ENCODE measurements at regions of chr20 and their contacts with region 1.

Region 1: DNA sequence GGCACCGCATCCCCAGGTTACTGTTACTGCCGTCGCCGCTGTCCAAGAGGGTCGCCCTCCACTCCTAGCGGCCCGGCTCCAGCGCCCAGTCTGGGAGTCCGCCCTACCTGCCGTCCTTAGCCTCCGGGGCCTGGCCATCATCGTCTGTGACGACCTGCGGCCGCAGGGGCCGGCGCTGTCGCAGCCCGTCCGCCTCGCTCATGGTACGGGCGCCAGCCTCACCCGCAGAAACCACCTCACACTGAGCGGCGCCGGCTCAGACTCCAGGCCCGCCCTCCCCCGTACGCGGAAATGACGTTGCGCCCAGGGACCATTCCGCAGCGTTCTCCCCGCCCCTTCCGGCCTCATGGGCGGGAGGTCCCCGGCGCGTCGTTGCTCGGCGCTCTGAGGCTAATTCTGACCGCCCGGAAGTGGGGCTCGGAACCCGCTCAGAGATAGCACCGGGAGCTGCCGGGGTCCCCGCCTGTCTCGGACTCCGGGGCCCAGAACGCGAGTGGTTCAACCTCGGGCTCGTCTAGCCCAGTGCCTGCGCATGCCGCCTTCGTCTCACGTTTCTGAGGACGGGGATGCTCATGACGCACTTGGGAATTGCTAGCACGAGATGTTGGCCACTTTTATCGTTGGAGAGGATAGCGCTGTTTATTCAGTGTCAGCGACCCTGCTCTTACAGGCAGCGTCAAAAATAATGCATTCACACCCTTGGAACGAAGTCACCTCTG is at the start of gene APMAP:
- DNase-seq: peak; percentile 98
- H3K4me3 ChIP-seq: peak within 1 kb of the TSS; percentile 91 to 95
- H3K27ac ChIP-seq: peak within 1 kb of the TSS; percentile 76 to 89
- H3K4me1 ChIP-seq: peaks cover 17 to 20% of the 10 kb centered on the region in 2 experiments; a peak in 3 of 4 replicates
- H3K27me3 ChIP-seq: no peaks in the 10 kb centered on the region
- CTCF ChIP-seq: no peak
- EP300 ChIP-seq: no peak
- RAD21 ChIP-seq: no peak
- polyA plus RNA-seq, gene APMAP: 107 and 115 TPM in 2 replicates

Region 2: DNA sequence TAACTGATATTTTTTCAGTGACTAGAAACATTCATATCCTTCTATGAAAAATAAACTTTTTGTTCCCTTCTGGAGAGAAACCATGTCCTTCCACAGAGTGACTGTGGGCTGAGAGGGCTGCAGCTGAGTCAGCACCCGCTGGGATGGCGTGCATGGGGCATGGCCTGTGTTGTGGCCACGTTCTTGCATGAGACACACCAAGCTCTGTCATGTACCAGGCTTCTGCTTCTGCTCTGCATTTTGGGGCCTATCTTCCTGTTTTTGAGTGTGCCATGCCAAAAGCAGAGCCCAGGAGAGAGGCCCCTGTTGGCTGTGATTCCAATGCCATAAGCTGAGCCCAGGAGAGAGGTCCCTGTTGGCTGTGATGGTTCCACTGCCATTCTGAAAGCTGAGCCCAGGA is 10.9 kb before region 1 on chr20:
- CTCF ChIA-PET with region 1: interaction called, 10 read pairs
- POLR2A ChIA-PET with region 1: no interaction called
- DNase-seq: no peak
- H3K4me3 ChIP-seq: no peak overlapping the region
- H3K27ac ChIP-seq: no peak overlapping the region
- H3K4me1 ChIP-seq: no peaks in the 10 kb centered on the region; a peak in 1 of 4 replicates
- H3K27me3 ChIP-seq: no peaks in the 10 kb centered on the region
- CTCF ChIP-seq: no peak
- EP300 ChIP-seq: no peak
- RAD21 ChIP-seq: no peak

Region 3: GRCh38 chr20:25009156-25010145 is 16.8 kb after region 1 on chr20:
- CTCF ChIA-PET with region 1: interaction called, 10 read pairs
- POLR2A ChIA-PET with region 1: no interaction called
- DNase-seq: no peak
- H3K4me3 ChIP-seq: no peak overlapping the region
- H3K27ac ChIP-seq: no peak overlapping the region
- H3K4me1 ChIP-seq: no peaks in the 10 kb centered on the region; a peak in 1 of 4 replicates
- H3K27me3 ChIP-seq: no peaks in the 10 kb centered on the region
- CTCF ChIP-seq: no peak
- EP300 ChIP-seq: no peak
- RAD21 ChIP-seq: no peak

Region 4: DNA sequence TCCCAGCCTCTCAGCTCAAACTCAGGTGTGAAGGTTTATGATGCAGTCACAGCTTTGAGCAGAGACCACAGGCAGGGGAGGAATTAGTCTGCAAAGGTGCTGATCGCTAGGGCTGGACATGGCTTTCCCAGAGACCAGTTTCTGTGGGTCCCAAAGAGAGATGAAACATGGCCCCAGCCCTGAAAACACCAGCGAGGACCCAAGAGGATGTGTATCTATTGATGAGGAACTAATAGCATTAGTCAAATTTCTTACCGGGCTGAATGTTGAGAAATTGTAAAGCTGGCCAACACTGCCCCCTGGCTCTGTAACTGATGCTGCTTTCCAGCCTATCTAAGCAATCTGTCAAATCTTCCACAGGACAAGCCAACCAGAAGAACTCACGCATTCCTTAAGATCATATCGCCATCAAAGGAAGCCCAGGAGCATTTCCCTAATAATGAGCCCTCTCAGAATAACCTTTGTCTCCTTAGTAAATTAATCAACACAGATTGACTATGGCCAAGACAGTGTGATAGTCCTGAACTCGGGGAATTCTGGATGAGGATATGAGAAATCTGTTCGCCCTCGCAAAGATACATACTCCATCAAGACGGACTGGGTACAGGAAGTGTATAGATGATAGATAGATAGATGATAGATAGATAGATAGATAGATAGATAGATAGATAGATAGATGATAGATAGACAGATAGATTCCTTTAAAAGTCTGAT is 73.1 kb after region 1 on chr20:
- CTCF ChIA-PET with region 1: interaction called, 48 read pairs
- POLR2A ChIA-PET with region 1: no interaction called
- DNase-seq: peak; percentile 63
- H3K4me3 ChIP-seq: peak overlapping the region in 1 of 2 experiments; percentile 11; a peak in 1 of 4 replicates
- H3K27ac ChIP-seq: no peak overlapping the region
- H3K4me1 ChIP-seq: no peaks in the 10 kb centered on the region
- H3K27me3 ChIP-seq: peaks cover 71% of the 10 kb centered on the region
- CTCF ChIP-seq: peak; percentile 73
- EP300 ChIP-seq: no peak
- RAD21 ChIP-seq: peak; percentile 75

Region 5: DNA sequence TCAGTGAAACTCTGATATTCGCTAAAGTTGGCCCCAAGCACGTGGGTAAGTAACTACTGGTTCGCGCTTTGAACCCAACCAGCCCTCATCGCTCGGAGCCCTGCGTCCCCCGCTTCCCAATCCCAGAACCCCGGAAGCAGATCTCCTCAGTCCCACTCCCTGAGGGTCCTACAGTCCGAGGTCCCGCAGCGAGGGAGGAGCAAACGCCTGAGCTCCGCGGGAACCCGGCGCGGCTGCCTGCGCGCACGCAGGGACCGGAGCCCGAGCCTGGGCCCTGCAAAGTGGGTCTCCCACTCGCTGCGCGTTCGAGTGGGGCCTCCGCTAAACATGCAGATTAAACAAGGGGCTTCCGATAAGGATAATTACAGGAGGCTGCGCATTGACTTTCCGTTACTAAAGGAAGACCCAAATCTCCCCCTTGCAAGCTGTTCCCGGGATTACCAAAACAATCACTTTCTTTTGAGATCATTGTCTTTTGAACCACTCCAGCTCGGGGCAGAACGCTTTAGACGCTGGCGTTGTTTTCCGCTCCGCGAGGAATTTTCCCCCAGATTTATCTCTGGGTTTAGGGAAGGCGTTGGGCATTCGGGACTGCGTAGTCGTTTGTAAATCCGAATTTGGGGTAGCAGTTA is 90.6 kb after region 1 on chr20:
- CTCF ChIA-PET with region 1: no interaction called
- POLR2A ChIA-PET with region 1: no interaction called
- DNase-seq: peak; percentile 45
- H3K4me3 ChIP-seq: peak overlapping the region in 1 of 2 experiments; percentile 1; a peak in 1 of 4 replicates
- H3K27ac ChIP-seq: no peak overlapping the region
- H3K4me1 ChIP-seq: peaks cover 0 to 5% of the 10 kb centered on the region in 2 experiments; a peak in 1 of 4 replicates
- H3K27me3 ChIP-seq: peaks cover 74% of the 10 kb centered on the region
- CTCF ChIP-seq: no peak
- EP300 ChIP-seq: no peak
- RAD21 ChIP-seq: no peak

Region 6: GRCh38 chr20:25178563-25179438 is 186.2 kb after region 1 on chr20:
- CTCF ChIA-PET with region 1: interaction called, 23 read pairs
- POLR2A ChIA-PET with region 1: no interaction called
- DNase-seq: peak; percentile 65
- H3K4me3 ChIP-seq: peak overlapping the region in 1 of 2 experiments; percentile 4; a peak in 1 of 4 replicates
- H3K27ac ChIP-seq: peak overlapping the region in 1 of 2 experiments; percentile 46; a peak in 2 of 4 replicates
- H3K4me1 ChIP-seq: peaks cover 0 to 11% of the 10 kb centered on the region in 2 experiments; a peak in 1 of 4 replicates
- H3K27me3 ChIP-seq: peaks cover 7% of the 10 kb centered on the region; the same call in 1 of the 2 replicates
- CTCF ChIP-seq: peak; percentile 91
- EP300 ChIP-seq: peak in 1 of 2 experiments; percentile 59; a peak in 1 of 4 replicates
- RAD21 ChIP-seq: peak; percentile 90

Region 7: DNA sequence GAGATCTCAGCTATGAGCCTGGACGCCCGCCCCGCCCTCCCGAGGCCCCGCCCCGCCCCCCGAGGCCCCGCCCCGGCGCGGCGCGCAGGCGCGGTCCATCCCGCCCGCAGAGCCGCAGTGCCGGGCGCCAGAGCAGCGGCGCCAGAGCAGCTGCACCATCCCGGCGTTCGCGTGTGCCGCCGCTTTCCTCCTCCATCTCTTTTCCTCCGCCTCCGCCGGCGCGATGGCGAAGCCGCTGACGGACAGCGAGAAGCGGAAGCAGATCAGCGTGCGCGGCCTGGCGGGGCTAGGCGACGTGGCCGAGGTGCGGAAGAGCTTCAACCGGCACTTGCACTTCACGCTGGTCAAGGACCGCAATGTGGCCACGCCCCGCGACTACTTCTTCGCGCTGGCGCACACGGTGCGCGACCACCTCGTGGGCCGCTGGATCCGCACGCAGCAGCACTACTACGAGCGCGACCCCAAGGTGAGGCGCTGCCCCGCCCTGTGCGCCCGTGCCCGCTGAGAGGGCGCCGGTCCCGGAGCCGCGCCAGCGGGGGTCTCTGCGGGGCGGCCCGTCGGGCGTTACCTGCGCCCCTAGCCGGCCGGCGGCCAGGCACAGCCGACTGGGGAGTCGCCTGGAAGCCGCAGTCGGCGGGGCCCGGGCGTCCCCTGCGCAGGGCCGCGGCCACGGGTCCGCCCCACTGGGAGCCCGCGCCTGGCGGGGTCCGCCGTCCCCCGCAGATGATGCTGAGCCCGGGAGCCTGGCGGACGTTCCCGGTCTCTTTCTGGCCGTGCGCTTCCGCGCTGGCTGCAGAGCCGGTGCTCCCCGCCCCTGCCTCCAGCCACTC is 255.5 kb after region 1 on chr20 and contains the start of gene PYGB:
- CTCF ChIA-PET with region 1: interaction called, 13 read pairs
- POLR2A ChIA-PET with region 1: no interaction called
- DNase-seq: peak; percentile 98
- H3K4me3 ChIP-seq: peak within 1 kb of the TSS; percentile 92 to 98
- H3K27ac ChIP-seq: peak within 1 kb of the TSS; percentile 86 to 93
- H3K4me1 ChIP-seq: peaks cover 11 to 47% of the 10 kb centered on the region in 2 experiments
- H3K27me3 ChIP-seq: no peaks in the 10 kb centered on the region
- CTCF ChIP-seq: no peak
- EP300 ChIP-seq: no peak
- RAD21 ChIP-seq: no peak
- polyA plus RNA-seq, gene PYGB: 32.2 and 35.8 TPM in 2 replicates

Region 8: GRCh38 chr20:25399037-25399430 is 406.4 kb after region 1 on chr20:
- CTCF ChIA-PET with region 1: interaction called, 46 read pairs
- POLR2A ChIA-PET with region 1: no interaction called
- DNase-seq: peak; percentile 68
- H3K4me3 ChIP-seq: no peak overlapping the region
- H3K27ac ChIP-seq: no peak overlapping the region
- H3K4me1 ChIP-seq: 0 out of 4 replicates have a peak, but pooled peaks cover 0 to 3% of the 10 kb centered on the region in 2 experiments
- H3K27me3 ChIP-seq: no peaks in the 10 kb centered on the region
- CTCF ChIP-seq: peak; percentile 71
- EP300 ChIP-seq: no peak
- RAD21 ChIP-seq: peak; percentile 87

Measured in SK-N-SH (cell line).